Ovary (tissue), 10 donors: ENCODE measurements at regions of chr4 and their contacts with region 1.

Region 1: GRCh38 chr4:20544645-20545044 is 155.6 kb upstream of the PACRGL start:
- DNase-seq: no peak
- H3K4me3 ChIP-seq: no peak overlapping the region
- H3K27ac ChIP-seq: no peak overlapping the region
- H3K4me1 ChIP-seq: no peaks in the 10 kb centered on the region
- H3K27me3 ChIP-seq: no peaks in the 10 kb centered on the region
- CTCF ChIP-seq: peak; percentile 24 to 45 (median 27)
- EP300 ChIP-seq: no peak
- POLR2A ChIP-seq: no peak

Region 2: DNA sequence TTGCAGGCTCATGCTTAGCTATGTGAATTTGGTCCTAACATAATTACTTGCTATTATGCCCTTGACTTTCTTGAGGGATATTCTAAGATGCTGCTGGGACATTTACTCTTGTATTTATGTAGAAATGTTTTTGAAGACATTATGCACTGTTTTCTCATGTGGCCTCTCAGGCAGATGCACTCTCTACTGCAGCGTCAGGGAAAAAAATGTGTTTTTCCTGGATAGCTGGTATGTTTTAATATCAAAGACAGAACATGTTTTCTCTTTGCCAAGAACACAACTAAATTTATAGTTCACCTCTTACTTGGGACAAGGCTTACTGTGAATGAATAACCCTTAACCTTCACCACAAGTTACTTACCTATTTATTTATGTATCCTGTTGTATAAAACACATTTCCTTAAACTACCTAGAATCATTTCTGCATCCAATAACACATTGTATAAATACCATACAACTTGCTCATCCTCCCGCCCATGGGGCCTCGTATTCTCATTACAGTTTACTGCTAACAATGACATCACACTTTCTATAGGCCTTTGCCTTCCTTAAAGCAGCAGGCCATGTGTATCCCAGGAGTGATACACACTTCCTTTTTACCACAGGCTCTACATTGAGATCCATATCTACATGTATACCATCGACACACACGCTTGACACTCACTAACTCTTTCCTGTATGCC is 114.2 kb before region 1 on chr4:
- intact Hi-C with region 1: loop called in 2 of 4 experiments (anchors 10 kb)
- DNase-seq: no peak
- H3K4me3 ChIP-seq: no peak overlapping the region
- H3K27ac ChIP-seq: no peak overlapping the region
- H3K4me1 ChIP-seq: no peaks in the 10 kb centered on the region
- H3K27me3 ChIP-seq: no peaks in the 10 kb centered on the region
- CTCF ChIP-seq: no peak
- EP300 ChIP-seq: no peak
- POLR2A ChIP-seq: no peak

Region 3: DNA sequence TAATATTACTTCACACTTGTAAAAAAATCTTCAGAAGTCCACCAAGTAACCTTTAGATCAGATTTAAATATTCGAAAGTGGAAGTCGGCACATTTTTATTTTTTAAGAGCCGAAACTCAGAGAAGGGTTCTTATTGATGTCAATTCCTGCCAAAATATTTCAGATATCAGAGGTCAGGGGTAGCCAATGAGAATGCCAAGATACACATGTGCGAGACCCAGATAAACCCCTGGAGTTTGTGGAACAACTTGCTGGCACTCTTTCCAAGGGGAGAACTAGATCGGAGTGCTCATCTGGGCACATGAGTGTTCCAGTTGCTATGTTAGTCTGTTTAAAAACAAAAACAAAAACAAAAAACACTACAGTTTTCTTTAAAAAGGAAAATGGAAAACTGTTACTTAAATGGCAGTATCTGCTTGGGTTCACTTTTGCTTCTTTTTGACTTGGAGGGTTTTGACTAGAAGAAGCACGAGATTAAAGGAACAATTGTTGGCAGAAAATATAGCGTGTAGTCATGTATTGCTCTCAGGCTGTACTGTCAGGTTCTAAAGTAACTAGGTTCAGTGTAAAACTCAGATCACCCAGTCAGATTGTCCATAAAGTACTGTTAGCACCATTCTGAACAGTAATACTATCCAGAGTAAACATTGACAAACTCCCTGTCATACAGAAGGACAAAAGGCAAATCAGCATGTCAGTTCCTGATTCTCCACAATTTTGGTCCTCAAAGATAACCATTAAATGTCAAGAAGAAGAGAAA is 32.4 kb before region 1 on chr4:
- intact Hi-C with region 1: no loop called
- DNase-seq: no peak
- H3K4me3 ChIP-seq: no peak overlapping the region
- H3K27ac ChIP-seq: no peak overlapping the region
- H3K4me1 ChIP-seq: no peaks in the 10 kb centered on the region
- H3K27me3 ChIP-seq: no peaks in the 10 kb centered on the region
- CTCF ChIP-seq: no peak
- EP300 ChIP-seq: no peak
- POLR2A ChIP-seq: no peak

Region 4: GRCh38 chr4:22047793-22048192 is 1503.1 kb after region 1 on chr4:
- intact Hi-C with region 1: no loop called
- DNase-seq: no peak
- H3K4me3 ChIP-seq: no peak overlapping the region
- H3K27ac ChIP-seq: no peak overlapping the region
- H3K4me1 ChIP-seq: no peaks in the 10 kb centered on the region
- H3K27me3 ChIP-seq: no peaks in the 10 kb centered on the region
- CTCF ChIP-seq: no peak
- EP300 ChIP-seq: no peak
- POLR2A ChIP-seq: no peak